PC-3 (cell line): ENCODE measurements at regions of chr5 and their contacts with region 1.

Region 1: DNA sequence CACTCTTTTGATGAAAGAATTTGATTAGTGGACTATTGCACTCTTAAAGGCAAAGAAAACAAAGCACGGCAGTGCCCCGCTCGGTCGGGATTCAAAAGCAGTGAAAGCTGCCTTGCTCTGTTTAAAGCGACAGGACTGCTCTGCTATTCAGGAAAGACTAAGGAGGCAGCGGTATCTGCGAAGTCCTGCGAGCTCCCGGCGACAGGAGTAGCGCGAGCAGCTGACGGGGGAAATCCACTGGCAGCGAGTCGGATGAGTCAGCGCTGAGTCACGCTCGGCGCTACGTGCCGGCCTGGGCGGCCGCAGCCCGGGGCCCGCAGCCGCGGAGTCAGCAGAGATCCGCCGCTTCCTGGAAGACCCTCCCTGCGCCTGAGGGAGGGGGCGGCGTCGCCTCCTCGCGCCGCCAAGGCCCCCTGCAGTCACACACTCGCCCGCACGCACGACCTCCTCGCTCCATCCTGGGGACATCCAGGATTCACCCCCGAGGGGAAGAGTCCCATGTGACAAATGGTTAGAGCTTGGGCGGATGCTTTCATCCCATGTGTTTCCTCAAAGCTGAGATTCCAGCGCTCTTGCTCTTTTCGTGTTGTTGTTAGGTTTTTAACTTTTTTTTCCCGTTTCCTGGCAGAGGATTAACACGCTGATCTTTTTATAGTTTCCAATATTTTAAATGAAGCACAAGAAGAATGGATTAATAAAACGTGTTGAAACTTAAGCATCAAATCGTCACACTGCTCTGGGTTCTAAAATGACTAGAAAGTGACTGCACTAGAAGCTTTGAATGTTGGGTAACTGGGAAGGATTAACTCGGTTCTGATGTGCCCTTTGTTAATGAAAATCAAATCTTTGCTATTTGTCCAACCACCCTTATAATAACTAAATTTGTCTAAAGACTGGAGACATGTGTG is 102.5 kb downstream of the ARRDC3 start:
- DNase-seq: peak; percentile 97
- ATAC-seq: peak; percentile 84
- H3K4me3 ChIP-seq: peak overlapping the region; percentile 64
- H3K27ac ChIP-seq: peak overlapping the region; percentile 99
- H3K4me1 ChIP-seq: peaks cover 40% of the 10 kb centered on the region
- H3K27me3 ChIP-seq: no peaks in the 10 kb centered on the region
- CTCF ChIP-seq: no peak

Region 2: DNA sequence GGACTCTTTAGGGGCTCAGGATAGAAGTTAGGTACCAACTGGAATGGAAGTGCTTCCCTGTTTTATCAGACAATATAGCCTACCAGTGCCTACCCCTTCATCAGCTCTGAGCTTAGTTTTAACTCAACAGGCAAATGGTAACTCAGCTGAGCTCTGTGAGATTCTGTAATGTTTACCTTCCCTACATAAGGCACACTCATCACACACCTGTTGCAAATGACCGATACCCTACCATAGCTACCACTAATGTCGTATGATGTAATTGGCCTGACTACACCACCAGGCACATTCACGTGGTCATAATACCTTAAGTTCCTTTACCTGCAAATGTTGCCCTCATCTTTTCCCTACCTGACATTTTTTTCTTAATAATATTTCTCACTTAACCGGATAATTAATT is 467.2 kb before region 1 on chr5:
- CTCF ChIA-PET with region 1: no interaction called
- POLR2A ChIA-PET with region 1: no interaction called
- intact Hi-C with region 1: no loop called
- DNase-seq: no peak
- ATAC-seq: no peak
- H3K4me3 ChIP-seq: no peak overlapping the region
- H3K27ac ChIP-seq: no peak overlapping the region
- H3K4me1 ChIP-seq: no peaks in the 10 kb centered on the region
- H3K27me3 ChIP-seq: no peaks in the 10 kb centered on the region
- CTCF ChIP-seq: no peak

Region 3: DNA sequence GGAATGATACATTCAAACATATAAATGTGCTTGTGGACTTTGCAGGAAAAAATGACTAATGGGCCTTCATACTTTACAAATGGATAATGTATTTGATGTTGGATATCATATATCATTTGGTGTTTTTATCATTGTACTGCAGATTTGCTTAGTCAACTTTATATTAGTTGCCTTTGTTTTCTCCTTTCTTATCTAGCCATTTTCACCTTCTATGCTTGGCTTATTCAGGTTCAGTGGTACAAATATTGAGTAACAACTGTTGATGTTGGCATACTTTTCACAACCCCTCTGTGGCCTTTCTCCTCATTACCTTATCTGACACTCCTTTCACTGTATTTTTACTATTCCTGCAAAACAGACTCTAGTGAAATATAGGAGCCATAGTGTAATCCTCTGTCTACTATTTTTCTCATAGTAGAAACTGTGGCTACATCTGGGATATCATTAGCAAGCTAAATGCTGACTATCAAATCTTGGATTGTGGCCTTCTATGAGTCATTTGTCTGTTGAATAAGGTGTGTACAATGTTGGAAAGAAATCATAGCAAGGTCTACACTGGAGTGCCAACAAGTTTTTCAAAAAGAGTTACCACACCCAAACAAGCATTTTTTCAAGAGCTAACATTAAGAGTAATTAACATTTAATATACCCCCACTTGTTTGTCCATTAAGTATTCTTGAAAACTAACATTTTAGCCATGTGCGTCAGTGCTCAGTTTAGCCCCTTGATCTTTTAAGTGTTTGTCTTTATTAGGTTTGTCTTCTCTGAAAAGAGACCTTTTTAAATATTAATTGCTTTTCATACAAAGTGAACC is 391.9 kb before region 1 on chr5:
- CTCF ChIA-PET with region 1: no interaction called
- POLR2A ChIA-PET with region 1: interaction called, 19 read pairs
- intact Hi-C with region 1: no loop called
- DNase-seq: peak; percentile 93
- ATAC-seq: peak; percentile 77
- H3K4me3 ChIP-seq: peak overlapping the region; percentile 41
- H3K27ac ChIP-seq: peak overlapping the region; percentile 98
- H3K4me1 ChIP-seq: peaks cover 67% of the 10 kb centered on the region
- H3K27me3 ChIP-seq: no peaks in the 10 kb centered on the region
- CTCF ChIP-seq: no peak

Region 4: DNA sequence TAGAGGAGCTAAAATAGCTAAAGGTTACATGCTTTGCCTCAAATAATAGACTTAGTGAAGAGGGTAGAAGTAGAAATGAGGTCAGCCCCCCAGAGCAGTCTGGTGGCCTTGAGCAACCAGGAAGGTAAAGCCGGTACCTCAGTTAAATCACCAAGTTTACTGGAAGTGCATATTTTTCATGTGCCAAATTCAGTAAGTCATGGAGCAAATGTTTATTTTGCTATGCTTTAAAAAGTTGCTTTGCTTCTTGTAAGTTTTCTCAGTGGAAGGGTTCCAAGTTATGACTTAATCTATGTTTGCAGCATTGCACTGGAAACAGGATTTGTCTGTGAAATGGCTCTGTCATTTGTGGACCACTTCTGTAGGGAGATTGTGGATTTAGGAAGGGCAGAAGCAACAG is 154.2 kb before region 1 on chr5:
- CTCF ChIA-PET with region 1: no interaction called
- POLR2A ChIA-PET with region 1: no interaction called
- intact Hi-C with region 1: loop called (anchors 1 kb)
- DNase-seq: peak; percentile 90
- ATAC-seq: peak; percentile 77
- H3K4me3 ChIP-seq: no peak overlapping the region
- H3K27ac ChIP-seq: peak overlapping the region; percentile 50
- H3K4me1 ChIP-seq: peaks cover 43% of the 10 kb centered on the region
- H3K27me3 ChIP-seq: no peaks in the 10 kb centered on the region
- CTCF ChIP-seq: no peak

Region 5: GRCh38 chr5:91232523-91232922 is 48.1 kb before region 1 on chr5:
- CTCF ChIA-PET with region 1: no interaction called
- POLR2A ChIA-PET with region 1: no interaction called
- intact Hi-C with region 1: loop called (anchors 5 kb)
- DNase-seq: no peak
- ATAC-seq: peak; percentile 22; the same call in 1 of the 2 replicates
- H3K4me3 ChIP-seq: no peak overlapping the region
- H3K27ac ChIP-seq: no peak overlapping the region
- H3K4me1 ChIP-seq: no peaks in the 10 kb centered on the region
- H3K27me3 ChIP-seq: no peaks in the 10 kb centered on the region
- CTCF ChIP-seq: no peak

Region 6: DNA sequence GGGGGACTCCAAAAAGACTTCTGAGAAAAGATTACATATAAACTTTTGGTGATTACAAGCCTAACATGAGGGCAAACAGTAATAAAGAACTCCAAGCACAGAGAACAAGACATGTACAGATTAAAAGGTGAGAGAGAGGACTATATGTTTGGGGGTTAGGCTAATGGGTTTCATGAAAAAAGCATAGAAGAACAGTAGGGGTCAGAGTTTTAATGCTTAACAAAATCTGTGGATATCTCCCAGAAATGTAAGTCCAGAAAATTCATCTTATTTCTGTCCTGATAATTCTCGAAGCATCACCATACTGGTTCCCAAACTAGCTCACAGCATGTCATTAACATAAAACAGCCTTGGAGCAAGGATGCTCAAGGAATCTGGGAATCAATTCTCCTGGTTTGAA is 34.7 kb before region 1 on chr5:
- CTCF ChIA-PET with region 1: no interaction called
- POLR2A ChIA-PET with region 1: no interaction called
- intact Hi-C with region 1: no loop called
- DNase-seq: no peak
- ATAC-seq: no peak
- H3K4me3 ChIP-seq: no peak overlapping the region
- H3K27ac ChIP-seq: no peak overlapping the region
- H3K4me1 ChIP-seq: no peaks in the 10 kb centered on the region
- H3K27me3 ChIP-seq: no peaks in the 10 kb centered on the region
- CTCF ChIP-seq: no peak; the same call in 1 of the 2 replicates

Region 7: GRCh38 chr5:91266184-91266705 is 14.4 kb before region 1 on chr5:
- CTCF ChIA-PET with region 1: no interaction called
- POLR2A ChIA-PET with region 1: no interaction called
- intact Hi-C with region 1: no loop called
- DNase-seq: peak; percentile 61
- ATAC-seq: peak; percentile 79
- H3K4me3 ChIP-seq: no peak overlapping the region
- H3K27ac ChIP-seq: no peak overlapping the region
- H3K4me1 ChIP-seq: peaks cover 9% of the 10 kb centered on the region; the same call in 1 of the 2 replicates
- H3K27me3 ChIP-seq: no peaks in the 10 kb centered on the region
- CTCF ChIP-seq: peak; percentile 19; the same call in 1 of the 2 replicates

Region 8: DNA sequence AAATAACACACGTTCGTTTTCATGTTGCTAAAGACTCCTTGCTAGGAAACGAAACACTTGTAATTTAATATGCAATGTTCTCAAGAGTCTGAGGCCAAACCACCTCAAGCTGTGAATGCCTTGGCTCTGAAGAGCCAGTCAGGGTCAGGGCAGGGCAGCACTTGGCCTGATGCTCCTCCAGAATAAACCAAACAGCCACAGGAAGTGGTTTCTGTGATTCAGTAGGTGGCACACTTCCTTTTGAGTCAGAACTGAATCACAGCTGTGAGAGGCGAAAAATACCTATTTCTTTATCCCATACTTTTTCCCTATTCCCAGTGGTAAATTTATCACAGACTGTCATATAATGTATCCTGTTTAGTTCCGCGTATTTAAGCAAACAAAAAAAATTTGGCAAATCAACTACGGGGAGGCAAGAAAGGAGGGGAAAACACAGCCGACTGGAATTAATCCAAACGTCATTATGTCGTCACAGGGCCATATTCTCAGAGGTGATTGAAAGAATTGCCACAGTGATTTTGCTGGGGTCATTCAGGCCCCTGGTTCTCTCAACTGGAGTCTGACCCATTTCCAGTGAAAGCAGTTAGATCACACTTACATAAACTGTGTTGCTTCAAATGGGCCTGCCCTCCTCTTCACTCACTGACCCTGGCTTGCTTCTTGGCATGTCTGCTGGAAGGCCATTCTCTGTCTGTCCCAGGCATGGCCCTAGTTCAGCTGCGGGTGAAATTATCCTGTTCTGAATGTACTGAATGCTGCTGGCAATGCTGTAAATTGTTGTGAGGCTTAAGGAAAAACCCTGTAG is 31.3 kb after region 1 on chr5:
- CTCF ChIA-PET with region 1: no interaction called
- POLR2A ChIA-PET with region 1: interaction called, 34 read pairs
- intact Hi-C with region 1: loop called (anchors 1 kb)
- DNase-seq: peak; percentile 94
- ATAC-seq: peak; percentile 87
- H3K4me3 ChIP-seq: peak overlapping the region; percentile 17; the same call in 1 of the 2 replicates
- H3K27ac ChIP-seq: peak overlapping the region; percentile 98
- H3K4me1 ChIP-seq: peaks cover 39% of the 10 kb centered on the region
- H3K27me3 ChIP-seq: no peaks in the 10 kb centered on the region
- CTCF ChIP-seq: no peak

Region 9: GRCh38 chr5:91706785-91707520 is 426.3 kb after region 1 on chr5:
- CTCF ChIA-PET with region 1: no interaction called
- POLR2A ChIA-PET with region 1: no interaction called
- intact Hi-C with region 1: no loop called
- DNase-seq: no peak
- ATAC-seq: no peak
- H3K4me3 ChIP-seq: no peak overlapping the region
- H3K27ac ChIP-seq: no peak overlapping the region
- H3K4me1 ChIP-seq: no peaks in the 10 kb centered on the region
- H3K27me3 ChIP-seq: no peaks in the 10 kb centered on the region
- CTCF ChIP-seq: no peak